ENCODE measurements at regions of chr7 and their contacts with region 1.

Region 1: DNA sequence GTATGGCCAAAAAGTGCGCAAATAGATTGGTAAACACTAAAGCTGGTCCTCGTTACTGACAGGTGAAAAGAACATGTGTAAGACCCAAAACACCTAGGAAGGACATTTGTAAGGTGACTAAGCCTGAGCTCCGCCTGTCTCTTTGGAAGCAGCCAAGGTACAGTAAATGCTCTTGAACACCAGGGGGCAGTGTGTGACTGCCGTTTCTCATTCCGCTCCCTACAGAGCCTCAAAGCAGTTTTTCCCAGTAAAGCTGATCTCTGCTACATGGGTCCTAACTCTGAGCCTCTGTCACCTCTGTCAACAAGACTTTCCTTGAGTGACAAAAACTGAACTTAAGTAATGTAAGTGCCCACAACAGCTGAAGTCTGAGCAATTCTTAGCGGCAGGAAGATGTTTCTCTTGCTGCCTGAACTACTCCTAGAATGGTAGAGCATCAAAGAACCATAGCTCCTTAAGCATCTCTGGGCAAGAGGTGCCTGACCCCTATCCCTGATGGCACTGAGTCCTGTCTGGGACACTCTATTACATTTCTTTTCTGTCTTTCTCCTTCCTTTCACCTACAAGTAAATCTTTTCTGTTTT is 238.0 kb upstream of the INHBA start:
- DNase-seq: peak; percentile 85
- H3K4me3 Mint-ChIP-seq: no peak overlapping the region
- H3K27ac Mint-ChIP-seq: no peak overlapping the region
- H3K4me1 Mint-ChIP-seq: peaks cover 10% of the 10 kb centered on the region
- H3K27me3 Mint-ChIP-seq: peaks cover 22% of the 10 kb centered on the region

Region 2: DNA sequence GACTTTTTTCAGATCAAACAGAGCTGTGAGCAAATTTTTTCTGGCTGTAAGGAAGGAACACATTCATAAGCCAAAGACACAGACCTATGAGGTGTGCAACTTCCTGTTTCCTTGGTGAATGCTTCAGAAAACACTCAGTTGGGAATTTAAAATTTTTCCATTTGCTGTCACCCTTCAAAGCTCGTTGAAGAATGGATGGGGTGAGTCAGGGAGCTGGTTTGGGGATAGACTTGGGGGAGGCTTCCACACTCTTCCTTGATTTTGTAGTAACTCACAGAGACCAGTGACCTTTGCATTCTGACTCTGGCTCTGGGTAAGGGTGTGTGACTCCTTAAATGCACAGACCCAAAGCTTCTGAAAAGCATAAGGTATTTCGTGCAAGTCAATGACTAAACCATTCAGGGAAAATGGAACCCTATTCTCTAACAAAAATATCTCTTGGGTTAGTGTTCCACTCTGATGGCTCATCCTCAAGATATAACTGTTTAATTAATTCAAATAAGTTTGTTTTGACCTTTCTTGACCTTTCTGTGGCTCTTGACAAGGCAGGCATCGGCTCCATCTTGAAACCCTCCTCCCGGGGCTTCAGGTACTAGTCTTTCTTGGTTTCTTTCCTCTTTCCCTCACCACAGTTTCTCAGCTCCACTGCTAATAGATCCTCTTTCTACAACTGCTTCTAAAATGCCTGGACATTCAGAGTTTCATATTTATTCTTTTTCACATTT is 10.2 kb before region 1 on chr7:
- intact Hi-C with region 1: no loop called
- DNase-seq: no peak
- H3K4me3 Mint-ChIP-seq: no peak overlapping the region
- H3K27ac Mint-ChIP-seq: no peak overlapping the region
- H3K4me1 Mint-ChIP-seq: peaks cover 4% of the 10 kb centered on the region
- H3K27me3 Mint-ChIP-seq: peaks cover 6% of the 10 kb centered on the region

Region 3: GRCh38 chr7:42014625-42015546 is 74.0 kb after region 1 on chr7:
- intact Hi-C with region 1: no loop called
- DNase-seq: peak; percentile 66
- H3K4me3 Mint-ChIP-seq: no peak overlapping the region
- H3K27ac Mint-ChIP-seq: no peak overlapping the region
- H3K4me1 Mint-ChIP-seq: no peaks in the 10 kb centered on the region
- H3K27me3 Mint-ChIP-seq: peaks cover 1% of the 10 kb centered on the region

Region 4: GRCh38 chr7:42237162-42237821 is 296.4 kb after region 1 on chr7 and contains the start of gene GLI3:
- intact Hi-C with region 1: loop called (anchors 5 kb)
- DNase-seq: peak; percentile 64
- H3K4me3 Mint-ChIP-seq: peak within 1 kb of the TSS; percentile 81
- H3K27ac Mint-ChIP-seq: no peak within 1 kb of the TSS
- H3K4me1 Mint-ChIP-seq: peaks cover 5% of the 10 kb centered on the region
- H3K27me3 Mint-ChIP-seq: peaks cover 68% of the 10 kb centered on the region
- total RNA-seq, gene GLI3: not detected in 2 replicates

Region 5: DNA sequence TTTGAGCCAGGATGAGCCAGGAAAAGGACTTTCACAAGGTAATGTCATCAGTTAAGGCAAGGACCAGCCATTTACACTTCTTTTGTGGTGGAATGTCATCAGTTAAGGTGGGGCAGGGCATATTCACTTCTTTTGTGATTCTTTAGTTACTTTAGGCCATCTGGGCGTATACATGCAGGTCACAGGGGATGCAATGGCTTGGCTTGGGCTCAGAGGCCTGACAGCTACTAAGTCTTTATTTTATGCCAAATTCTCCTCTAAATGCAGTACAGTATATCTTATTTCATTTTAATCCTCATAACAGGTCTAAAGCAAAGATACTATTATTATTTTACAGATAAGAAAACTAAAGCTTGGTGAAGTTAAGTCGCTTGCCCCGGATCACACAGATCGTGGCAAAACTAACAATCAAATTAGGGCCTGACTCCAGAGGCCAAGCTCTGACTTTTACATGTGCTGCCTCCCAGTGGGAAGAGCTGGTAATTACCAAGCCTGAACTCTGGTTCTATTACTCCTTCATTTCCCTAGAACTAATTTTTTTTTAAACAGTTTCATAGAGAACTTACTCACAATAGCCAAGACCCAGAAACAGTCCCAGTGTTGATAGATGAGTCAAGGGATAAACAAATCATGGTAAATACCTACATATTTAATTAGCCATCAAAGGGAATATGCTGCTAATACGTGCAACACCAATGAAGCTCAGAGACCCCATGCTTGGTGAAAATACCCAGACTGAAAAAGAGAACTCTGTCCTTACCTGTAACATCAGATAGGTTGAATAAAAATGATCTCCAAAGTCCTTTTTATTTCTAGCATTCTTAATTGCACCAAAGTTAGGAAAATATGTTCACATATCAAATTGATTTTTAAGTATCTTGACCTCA is 935.6 kb after region 1 on chr7:
- intact Hi-C with region 1: loop called (anchors 2 kb)
- DNase-seq: peak; percentile 86
- H3K4me3 Mint-ChIP-seq: no peak overlapping the region
- H3K27ac Mint-ChIP-seq: no peak overlapping the region
- H3K4me1 Mint-ChIP-seq: peaks cover 6% of the 10 kb centered on the region
- H3K27me3 Mint-ChIP-seq: peaks cover 5% of the 10 kb centered on the region

Region 6: GRCh38 chr7:43260980-43261878 is 1320.4 kb after region 1 on chr7:
- intact Hi-C with region 1: loop called (anchors 2 kb)
- DNase-seq: peak; percentile 89
- H3K4me3 Mint-ChIP-seq: no peak overlapping the region
- H3K27ac Mint-ChIP-seq: no peak overlapping the region
- H3K4me1 Mint-ChIP-seq: peaks cover 2% of the 10 kb centered on the region
- H3K27me3 Mint-ChIP-seq: peaks cover 9% of the 10 kb centered on the region

Measured in activated CD4-positive, alpha-beta T cell treated with anti-CD3 and anti-CD28 coated beads, Interleukin-2, amount 10 ng/mL, durations not matched to agents 24 days and 14 days (primary cell).